ENCODE measurements at regions of chr10 and their contacts with region 1.

Region 1: GRCh38 chr10:58414270-58415041 is 29.2 kb downstream of the TFAM start:
- DNase-seq: no peak
- ATAC-seq: peak; percentile 61 to 77 (median 70)
- H3K4me3 ChIP-seq: no peak overlapping the region
- H3K27ac ChIP-seq: peak overlapping the region in 5 of 12 donors; percentile 6 to 56 (median 38)
- H3K4me1 ChIP-seq: peaks cover 0 to 7% (median 0%) of the 10 kb centered on the region in 12 donors
- H3K27me3 ChIP-seq: peaks cover 0 to 3% (median 0%) of the 10 kb centered on the region in 9 donors
- CTCF ChIP-seq: peak in 9 of 12 donors; percentile 14 to 49 (median 38)
- POLR2A ChIP-seq: no peak

Region 2: GRCh38 chr10:58588673-58589265 is 174.3 kb after region 1 on chr10:
- intact Hi-C with region 1: loop called in 1 of 10 experiments (anchors 10 kb)
- DNase-seq: peak in 1 of 5 donors; percentile 24
- ATAC-seq: peak in 2 of 4 donors; percentile 32 to 34
- H3K4me3 ChIP-seq: no peak overlapping the region
- H3K27ac ChIP-seq: no peak overlapping the region
- H3K4me1 ChIP-seq: peaks cover 0 to 23% (median 6%) of the 10 kb centered on the region in 12 donors
- H3K27me3 ChIP-seq: no peaks in the 10 kb centered on the region
- CTCF ChIP-seq: peak in 7 of 12 donors; percentile 7 to 33 (median 31)
- POLR2A ChIP-seq: no peak